Tibial artery (tissue), 4 donors: ENCODE measurements at regions of chr6 and their contacts with region 1.

Region 1: GRCh38 chr6:16238057-16238962 is at the start of gene GMPR:
- DNase-seq: peak; percentile 83 to 95
- H3K4me3 ChIP-seq: peak within 1 kb of the TSS; percentile 85 to 89
- H3K27ac ChIP-seq: peak within 1 kb of the TSS; percentile 87
- H3K4me1 ChIP-seq: peaks cover 0 to 58% (median 38%) of the 10 kb centered on the region in 4 donors
- H3K27me3 ChIP-seq: no peaks in the 10 kb centered on the region
- CTCF ChIP-seq: no peak

Region 2: GRCh38 chr6:16277101-16277981 is 39.0 kb after region 1 on chr6:
- intact Hi-C with region 1: loop called (anchors 2 kb)
- DNase-seq: peak; percentile 85 to 94
- H3K4me3 ChIP-seq: peak overlapping the region; percentile 10 to 11
- H3K27ac ChIP-seq: peak overlapping the region; percentile 39 to 60
- H3K4me1 ChIP-seq: peaks cover 0 to 29% (median 20%) of the 10 kb centered on the region in 4 donors
- H3K27me3 ChIP-seq: no peaks in the 10 kb centered on the region
- CTCF ChIP-seq: peak; percentile 47 to 50

Region 3: DNA sequence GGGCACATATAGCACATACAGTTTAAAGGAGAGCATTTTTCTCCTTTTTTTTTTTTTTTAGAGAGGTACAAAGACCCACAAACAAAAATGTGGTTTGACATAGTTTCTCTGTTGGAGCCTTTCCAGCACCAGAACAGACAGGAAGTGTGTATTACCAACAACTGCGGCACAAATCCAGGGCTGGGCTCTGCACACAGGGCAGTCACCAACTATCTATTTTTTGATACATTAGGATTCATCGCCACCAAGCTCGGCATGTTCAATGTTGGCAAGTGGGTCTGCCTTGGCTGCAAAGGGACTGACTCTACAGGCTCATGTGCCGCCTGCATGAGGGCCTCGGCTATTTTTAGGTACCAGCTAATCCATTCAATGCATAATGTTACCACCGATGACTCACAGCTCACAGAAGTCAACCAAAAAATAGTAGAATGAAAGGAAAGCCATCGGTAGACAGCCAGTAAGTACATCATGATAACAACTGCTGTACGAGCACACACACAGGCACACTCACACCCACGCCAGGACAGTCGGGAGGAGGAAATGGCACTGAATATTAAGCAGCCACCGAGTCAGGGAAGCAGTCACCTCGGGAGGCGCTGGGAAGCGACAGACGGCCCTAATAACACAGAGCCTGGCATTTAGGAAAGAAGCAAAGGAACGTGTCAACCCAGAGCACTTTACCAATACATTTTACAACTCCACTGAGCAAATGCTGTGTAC is 81.7 kb after region 1 on chr6:
- intact Hi-C with region 1: loop called (anchors 5 kb)
- DNase-seq: peak; percentile 87 to 90
- H3K4me3 ChIP-seq: peak overlapping the region; percentile 32 to 39
- H3K27ac ChIP-seq: peak overlapping the region; percentile 92 to 96
- H3K4me1 ChIP-seq: peaks cover 0 to 79% (median 48%) of the 10 kb centered on the region in 4 donors
- H3K27me3 ChIP-seq: no peaks in the 10 kb centered on the region
- CTCF ChIP-seq: no peak